ENCODE measurements at regions of chr19 and their contacts with region 1.

Region 1: DNA sequence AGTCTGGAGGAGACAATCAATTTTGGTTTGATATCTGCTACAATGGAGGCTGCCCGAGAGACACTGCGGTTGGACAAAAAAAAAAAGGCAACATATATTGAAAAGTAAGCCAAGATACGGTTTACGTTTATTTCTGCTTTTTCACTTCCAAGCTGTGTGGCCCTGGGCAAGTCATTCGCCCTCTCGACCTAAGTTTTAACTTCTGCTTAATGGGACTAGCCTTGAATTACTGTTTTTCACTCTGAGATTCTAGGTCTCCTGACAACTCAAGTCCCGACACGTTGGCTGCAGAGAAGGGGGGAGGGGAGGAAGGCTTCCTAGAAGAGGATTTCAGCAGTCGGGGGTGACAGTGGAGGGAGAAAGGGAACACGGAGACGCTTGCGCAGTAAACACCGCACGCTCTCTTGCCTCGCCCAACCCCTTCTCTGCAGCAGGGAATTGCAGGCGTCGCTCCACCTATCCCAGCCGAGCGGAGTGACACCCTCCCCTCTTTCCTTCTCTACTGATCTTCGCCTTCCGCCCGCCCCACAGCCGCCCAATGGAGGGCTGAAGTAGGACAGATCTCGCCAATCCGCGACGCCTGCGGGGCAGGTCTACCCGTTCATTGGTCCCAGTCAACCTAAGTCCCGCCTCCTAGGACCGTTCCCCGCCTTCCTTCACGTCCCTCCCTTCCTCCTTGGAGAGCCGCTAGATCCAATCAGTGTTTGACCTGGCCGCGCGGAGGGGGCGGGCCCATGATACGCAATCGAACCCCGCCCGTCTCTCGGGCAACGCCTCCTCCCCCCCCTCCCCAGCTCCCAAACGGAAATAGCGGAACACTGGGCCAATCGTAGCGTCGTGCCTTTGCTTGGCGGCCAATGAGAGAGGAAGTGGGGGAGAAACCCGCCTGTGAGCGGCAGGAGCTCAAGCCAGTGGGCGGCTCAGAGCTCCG is 529 bp upstream of the AP2A1 start:
- DNase-seq: peak; percentile 100
- ATAC-seq: peak; percentile 91
- H3K4me3 ChIP-seq: peak overlapping the region; percentile 91 to 97
- H3K27ac ChIP-seq: peak overlapping the region; percentile 88
- H3K4me1 ChIP-seq: peaks cover 21 to 37% of the 10 kb centered on the region in 2 experiments
- H3K27me3 ChIP-seq: no peaks in the 10 kb centered on the region
- CTCF ChIP-seq: no peak
- POLR2A ChIP-seq: peak; percentile 47
- RAD21 ChIP-seq: no peak

Region 2: GRCh38 chr19:49590071-49590970 is 176.0 kb before region 1 on chr19:
- CTCF ChIA-PET with region 1: no interaction called
- POLR2A ChIA-PET with region 1: no interaction called
- RAD21 ChIA-PET with region 1: no interaction called
- intact Hi-C with region 1: loop called (anchors 2 kb)
- DNase-seq: peak; percentile 97
- ATAC-seq: peak; percentile 82
- H3K4me3 ChIP-seq: peak overlapping the region; percentile 89 to 93
- H3K27ac ChIP-seq: peak overlapping the region; percentile 98
- H3K4me1 ChIP-seq: peaks cover 10 to 33% of the 10 kb centered on the region in 2 experiments; a peak in 3 of 4 replicates
- H3K27me3 ChIP-seq: no peaks in the 10 kb centered on the region
- CTCF ChIP-seq: no peak
- POLR2A ChIP-seq: peak; percentile 90
- RAD21 ChIP-seq: no peak

Region 3: GRCh38 chr19:49718511-49718910 is 47.8 kb before region 1 on chr19:
- CTCF ChIA-PET with region 1: interaction called, 5 read pairs
- POLR2A ChIA-PET with region 1: interaction called, 4 read pairs
- RAD21 ChIA-PET with region 1: no interaction called
- intact Hi-C with region 1: loop called (anchors 1 kb)
- DNase-seq: no peak
- ATAC-seq: no peak
- H3K4me3 ChIP-seq: peak overlapping the region; percentile 62 to 87
- H3K27ac ChIP-seq: peak overlapping the region; percentile 68
- H3K4me1 ChIP-seq: peaks cover 3 to 24% of the 10 kb centered on the region in 2 experiments
- H3K27me3 ChIP-seq: no peaks in the 10 kb centered on the region
- CTCF ChIP-seq: no peak
- POLR2A ChIP-seq: no peak
- RAD21 ChIP-seq: no peak

Region 4: GRCh38 chr19:49808711-49809159 is 42.5 kb after region 1 on chr19:
- CTCF ChIA-PET with region 1: interaction called, 8 read pairs
- POLR2A ChIA-PET with region 1: no interaction called
- RAD21 ChIA-PET with region 1: no interaction called
- intact Hi-C with region 1: loop called (anchors 5 kb)
- DNase-seq: no peak
- ATAC-seq: peak; percentile 45
- H3K4me3 ChIP-seq: peak overlapping the region; percentile 49 to 60
- H3K27ac ChIP-seq: peak overlapping the region; percentile 63; the same call in 1 of the 2 replicates
- H3K4me1 ChIP-seq: peaks cover 4 to 41% of the 10 kb centered on the region in 2 experiments
- H3K27me3 ChIP-seq: no peaks in the 10 kb centered on the region
- CTCF ChIP-seq: no peak
- POLR2A ChIP-seq: no peak
- RAD21 ChIP-seq: no peak

Region 5: DNA sequence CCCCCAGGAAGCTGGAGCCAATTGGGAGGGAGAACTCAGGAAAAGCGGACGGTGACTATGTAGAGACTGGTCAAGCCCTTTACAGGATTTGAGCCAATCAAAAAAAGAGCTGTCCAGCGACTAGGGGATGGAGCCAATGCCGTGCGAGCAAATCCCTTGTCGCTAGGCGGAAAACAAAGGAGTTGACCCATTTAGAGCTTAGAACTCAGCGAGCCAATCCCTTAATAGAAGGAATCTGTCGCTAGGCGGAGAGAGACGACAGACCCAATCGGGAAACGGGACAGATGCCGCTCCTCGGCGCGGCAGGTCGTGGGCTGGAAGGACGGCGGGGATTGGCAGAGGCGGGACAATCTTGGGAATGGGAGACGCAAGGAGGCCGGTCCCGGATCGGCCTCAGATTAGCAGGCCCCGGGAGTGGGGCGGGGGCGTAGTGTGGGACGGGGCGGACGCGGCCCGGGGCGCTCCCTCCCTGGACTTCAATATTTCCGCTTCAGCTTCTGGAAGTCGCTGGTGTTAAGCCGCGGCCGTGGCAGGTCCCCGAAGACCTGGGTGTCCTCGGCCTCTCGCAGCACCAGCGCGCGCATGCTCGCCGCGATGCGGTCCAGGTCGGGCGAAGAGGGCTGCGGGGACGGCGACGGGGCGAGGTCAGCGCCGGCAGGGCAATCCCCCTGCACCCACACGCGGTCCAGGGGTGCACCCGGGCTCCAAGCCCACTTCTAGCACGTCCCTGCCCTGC is 103.3 kb after region 1 on chr19:
- CTCF ChIA-PET with region 1: no interaction called
- POLR2A ChIA-PET with region 1: no interaction called
- RAD21 ChIA-PET with region 1: no interaction called
- intact Hi-C with region 1: loop called (anchors 5 kb)
- DNase-seq: peak; percentile 100
- ATAC-seq: peak; percentile 77
- H3K4me3 ChIP-seq: peak overlapping the region; percentile 55 to 61
- H3K27ac ChIP-seq: peak overlapping the region; percentile 91
- H3K4me1 ChIP-seq: peaks cover 29 to 55% of the 10 kb centered on the region in 2 experiments; a peak in 3 of 4 replicates
- H3K27me3 ChIP-seq: no peaks in the 10 kb centered on the region
- CTCF ChIP-seq: no peak
- POLR2A ChIP-seq: peak; percentile 69
- RAD21 ChIP-seq: no peak